ENCODE measurements at regions of chr9 and their contacts with region 1.

Region 1: DNA sequence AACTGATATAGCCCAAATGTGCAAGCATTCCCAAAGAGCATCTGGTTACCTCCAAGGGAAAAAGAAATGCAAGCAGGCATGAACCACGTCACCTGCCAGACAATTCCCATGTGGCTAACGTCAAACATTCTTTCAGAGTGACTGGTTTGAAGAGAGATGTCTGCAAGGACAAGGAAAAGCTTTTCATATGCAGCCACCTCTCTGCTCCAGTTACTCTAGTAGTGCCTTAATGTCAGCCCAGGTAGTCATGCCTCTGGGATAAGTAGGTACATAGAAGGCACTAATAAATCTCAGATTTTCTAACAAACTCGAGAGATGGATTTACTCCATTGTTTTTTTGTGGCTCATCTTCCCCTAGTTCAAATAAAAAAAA is 96.8 kb upstream of the IFNK start:
- DNase-seq: no peak
- ATAC-seq: no peak
- H3K4me3 Mint-ChIP-seq: no peak overlapping the region
- H3K27ac Mint-ChIP-seq: no peak overlapping the region
- H3K4me1 Mint-ChIP-seq: peaks cover 68% of the 10 kb centered on the region
- H3K27me3 Mint-ChIP-seq: no peaks in the 10 kb centered on the region
- CTCF ChIP-seq: no peak

Region 2: DNA sequence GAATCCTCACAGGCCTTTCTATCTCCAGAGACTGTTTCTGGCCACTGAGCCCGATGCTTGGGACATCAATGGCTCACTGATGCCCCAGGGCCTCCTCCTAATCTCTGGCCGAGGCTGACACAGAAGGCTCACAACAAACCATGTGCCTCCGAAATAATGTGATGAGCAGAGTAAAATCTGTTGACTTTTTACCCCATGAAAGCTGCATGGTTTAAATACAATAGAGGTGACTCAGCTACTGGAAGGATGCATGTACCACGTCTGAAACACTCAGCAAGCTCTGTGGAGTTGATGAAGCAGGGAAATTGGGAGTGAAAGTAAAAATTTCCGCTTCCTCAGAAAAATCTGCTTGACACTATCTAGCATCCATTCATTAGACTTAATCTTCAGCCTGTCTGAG is 19.3 kb before region 1 on chr9:
- CTCF ChIA-PET with region 1: no interaction called
- POLR2A ChIA-PET with region 1: interaction called, 4 read pairs
- intact Hi-C with region 1: loop called (anchors 1 kb)
- DNase-seq: no peak
- ATAC-seq: no peak
- H3K4me3 Mint-ChIP-seq: no peak overlapping the region
- H3K27ac Mint-ChIP-seq: no peak overlapping the region
- H3K4me1 Mint-ChIP-seq: peaks cover 29% of the 10 kb centered on the region
- H3K27me3 Mint-ChIP-seq: no peaks in the 10 kb centered on the region
- CTCF ChIP-seq: no peak

Region 3: GRCh38 chr9:27414220-27414761 is 13.0 kb before region 1 on chr9:
- CTCF ChIA-PET with region 1: no interaction called
- POLR2A ChIA-PET with region 1: interaction called, 4 read pairs
- intact Hi-C with region 1: loop called (anchors 2 kb)
- DNase-seq: no peak
- ATAC-seq: no peak
- H3K4me3 Mint-ChIP-seq: no peak overlapping the region
- H3K27ac Mint-ChIP-seq: no peak overlapping the region
- H3K4me1 Mint-ChIP-seq: peaks cover 32% of the 10 kb centered on the region
- H3K27me3 Mint-ChIP-seq: no peaks in the 10 kb centered on the region
- CTCF ChIP-seq: no peak

Region 4: DNA sequence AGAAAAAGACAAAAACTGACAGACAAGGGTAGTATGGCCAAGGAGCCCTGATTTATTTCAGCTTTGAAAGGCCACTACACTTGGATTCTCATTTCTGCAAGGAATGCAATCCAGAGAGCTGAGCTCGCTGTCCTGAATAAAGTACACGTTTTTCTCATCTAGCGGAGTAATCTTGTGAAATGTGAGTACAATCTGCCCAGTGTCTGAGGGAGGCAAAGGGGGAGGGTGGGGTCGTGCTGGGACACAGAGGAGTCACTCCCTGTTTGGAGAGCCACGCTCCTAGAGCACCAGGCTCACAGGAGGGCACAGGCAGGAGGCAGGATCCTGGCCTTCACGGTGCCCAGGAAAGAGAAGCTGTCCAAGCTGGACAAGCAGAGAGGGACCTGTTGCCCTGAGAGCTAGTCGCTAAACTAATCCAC is 45.9 kb after region 1 on chr9:
- CTCF ChIA-PET with region 1: no interaction called
- POLR2A ChIA-PET with region 1: no interaction called
- intact Hi-C with region 1: no loop called
- DNase-seq: no peak
- ATAC-seq: no peak
- H3K4me3 Mint-ChIP-seq: no peak overlapping the region
- H3K27ac Mint-ChIP-seq: no peak overlapping the region
- H3K4me1 Mint-ChIP-seq: peaks cover 88% of the 10 kb centered on the region
- H3K27me3 Mint-ChIP-seq: no peaks in the 10 kb centered on the region
- CTCF ChIP-seq: no peak

Region 5: GRCh38 chr9:27489087-27489876 is 62.0 kb after region 1 on chr9:
- CTCF ChIA-PET with region 1: no interaction called
- POLR2A ChIA-PET with region 1: no interaction called
- intact Hi-C with region 1: loop called (anchors 5 kb)
- DNase-seq: no peak
- ATAC-seq: peak; percentile 40
- H3K4me3 Mint-ChIP-seq: peak overlapping the region; percentile 20
- H3K27ac Mint-ChIP-seq: peak overlapping the region; percentile 46
- H3K4me1 Mint-ChIP-seq: peaks cover 78% of the 10 kb centered on the region
- H3K27me3 Mint-ChIP-seq: no peaks in the 10 kb centered on the region
- CTCF ChIP-seq: no peak

Measured in activated B cell treated with CpG ODN at 0.5 μM for 24 hours (primary cell).